H1 (cell line): ENCODE measurements at regions of chr22 and their contacts with region 1.

Region 1: GRCh38 chr22:25334162-25334490 is 114.7 kb downstream of the CRYBB2 start:
- DNase-seq: peak in 1 of 2 experiments; percentile 94
- H3K4me3 ChIP-seq: no peak overlapping the region
- H3K27ac ChIP-seq: no peak overlapping the region
- H3K4me1 ChIP-seq: no peaks in the 10 kb centered on the region
- H3K27me3 ChIP-seq: no peaks in the 10 kb centered on the region
- CTCF ChIP-seq: peak; percentile 81 to 88 (median 82)
- EP300 ChIP-seq: no peak
- POLR2A ChIP-seq: no peak
- RAD21 ChIP-seq: peak; percentile 69 to 78

Region 2: DNA sequence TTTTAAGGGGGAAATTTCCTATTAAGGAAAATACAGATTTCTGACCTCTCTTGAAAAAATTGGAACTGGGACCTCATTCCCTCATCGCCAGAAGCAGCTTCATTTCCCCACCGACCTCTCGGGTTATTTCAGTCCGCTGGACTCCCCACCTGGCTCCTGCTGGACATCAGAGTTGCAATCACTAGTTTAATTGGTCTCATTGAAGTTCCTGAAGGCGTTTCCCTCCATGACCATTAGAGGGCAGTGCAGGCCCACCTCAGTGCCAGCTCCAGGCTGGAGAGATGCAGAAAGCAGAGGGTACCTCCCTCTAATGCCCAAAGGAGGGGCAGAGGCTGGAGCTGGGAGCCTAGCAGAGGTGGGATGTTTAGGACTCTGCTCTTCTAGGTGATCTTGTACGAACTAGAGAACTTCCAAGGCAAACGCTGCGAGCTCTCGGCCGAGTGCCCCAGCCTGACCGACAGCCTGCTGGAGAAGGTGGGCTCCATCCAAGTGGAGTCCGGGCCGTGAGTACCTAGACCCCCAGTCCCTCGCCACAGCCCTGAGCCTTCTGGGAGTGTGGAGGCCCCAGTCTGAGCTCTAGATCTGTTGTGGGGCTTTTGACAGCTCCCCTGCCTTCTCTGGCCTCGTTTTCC is 131.7 kb before region 1 on chr22:
- CTCF ChIA-PET with region 1: interaction called, 21 read pairs
- POLR2A ChIA-PET with region 1: no interaction called
- DNase-seq: peak; percentile 54 to 89
- H3K4me3 ChIP-seq: no peak overlapping the region
- H3K27ac ChIP-seq: no peak overlapping the region
- H3K4me1 ChIP-seq: peaks cover 0 to 2% (median 0%) of the 10 kb centered on the region in 4 experiments; a peak in 3 of 7 replicates
- H3K27me3 ChIP-seq: no peaks in the 10 kb centered on the region
- CTCF ChIP-seq: peak; percentile 83 to 94 (median 91)
- EP300 ChIP-seq: no peak
- POLR2A ChIP-seq: no peak
- RAD21 ChIP-seq: peak; percentile 89 to 96

Region 3: DNA sequence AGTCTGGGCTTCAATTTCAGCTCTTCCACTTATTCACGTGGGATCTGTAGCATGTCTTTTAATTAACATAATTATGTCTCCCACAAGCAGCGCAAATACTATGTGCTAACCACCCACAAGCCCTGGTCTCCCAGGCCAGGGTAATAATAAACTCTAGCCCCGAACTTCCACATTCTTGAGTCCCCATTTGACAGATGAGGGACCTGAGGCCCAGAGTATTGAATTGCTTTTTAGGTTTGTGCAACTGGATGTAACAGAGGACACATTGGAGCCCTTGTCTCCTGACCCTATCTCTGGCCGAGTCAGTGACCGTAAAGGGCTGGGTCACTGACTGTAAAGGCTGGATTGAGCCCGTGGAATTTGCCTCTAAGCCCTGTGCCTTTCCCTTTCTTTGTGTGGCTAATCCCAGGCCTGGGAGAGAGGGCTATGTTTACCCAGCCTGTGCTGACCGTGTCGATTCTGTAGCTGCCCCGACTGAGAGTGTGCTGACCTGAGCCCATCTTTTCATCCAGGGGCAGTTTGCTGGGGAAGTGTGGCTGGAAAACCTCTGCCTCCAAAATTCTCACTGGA is 110.8 kb before region 1 on chr22:
- CTCF ChIA-PET with region 1: interaction called, 19 read pairs
- POLR2A ChIA-PET with region 1: no interaction called
- DNase-seq: no peak
- H3K4me3 ChIP-seq: no peak overlapping the region
- H3K27ac ChIP-seq: no peak overlapping the region
- H3K4me1 ChIP-seq: no peaks in the 10 kb centered on the region
- H3K27me3 ChIP-seq: peaks cover 0 to 4% (median 0%) of the 10 kb centered on the region in 4 experiments; a peak in 2 of 7 replicates
- CTCF ChIP-seq: no peak
- EP300 ChIP-seq: no peak
- POLR2A ChIP-seq: no peak
- RAD21 ChIP-seq: no peak

Region 4: DNA sequence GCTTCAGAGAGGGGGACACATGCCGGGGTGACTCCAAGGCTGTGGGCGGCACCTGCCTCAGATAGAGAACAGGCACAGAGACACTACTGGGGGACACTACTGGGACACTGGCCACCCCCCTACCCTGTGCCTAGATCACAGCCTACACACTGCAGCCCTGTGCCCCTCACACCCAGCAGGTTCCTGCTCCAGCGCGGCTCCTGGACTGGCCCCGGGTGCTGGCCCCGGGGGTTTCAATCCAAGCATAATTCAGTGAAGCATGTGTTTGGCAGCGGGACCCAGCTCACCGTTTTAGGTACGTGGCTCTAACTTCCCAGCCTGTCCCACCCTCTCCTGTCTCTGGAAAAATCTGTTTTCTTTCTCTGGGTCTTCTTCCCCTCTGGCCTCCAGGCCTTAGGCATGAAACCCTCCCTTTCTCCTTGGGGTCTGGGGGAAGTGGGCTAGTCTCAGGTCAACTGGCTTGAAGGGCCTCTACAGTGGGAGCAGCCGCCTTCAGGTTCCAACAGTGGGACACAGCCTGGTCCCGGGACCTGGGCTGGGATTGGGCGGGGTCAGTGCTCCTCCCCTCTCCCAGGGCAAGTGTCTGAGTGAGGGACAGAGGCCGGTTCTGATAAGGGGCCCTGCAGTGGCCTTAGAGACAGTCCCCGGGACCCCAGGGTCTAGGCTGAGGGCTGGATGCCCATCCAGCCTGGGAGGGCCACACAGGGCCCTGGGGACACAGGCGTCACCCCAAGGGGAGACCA is 15.9 kb before region 1 on chr22:
- CTCF ChIA-PET with region 1: interaction called, 10 read pairs
- POLR2A ChIA-PET with region 1: no interaction called
- DNase-seq: no peak
- H3K4me3 ChIP-seq: no peak overlapping the region
- H3K27ac ChIP-seq: no peak overlapping the region
- H3K4me1 ChIP-seq: no peaks in the 10 kb centered on the region
- H3K27me3 ChIP-seq: no peaks in the 10 kb centered on the region
- CTCF ChIP-seq: no peak
- EP300 ChIP-seq: no peak
- POLR2A ChIP-seq: no peak
- RAD21 ChIP-seq: no peak

Region 5: DNA sequence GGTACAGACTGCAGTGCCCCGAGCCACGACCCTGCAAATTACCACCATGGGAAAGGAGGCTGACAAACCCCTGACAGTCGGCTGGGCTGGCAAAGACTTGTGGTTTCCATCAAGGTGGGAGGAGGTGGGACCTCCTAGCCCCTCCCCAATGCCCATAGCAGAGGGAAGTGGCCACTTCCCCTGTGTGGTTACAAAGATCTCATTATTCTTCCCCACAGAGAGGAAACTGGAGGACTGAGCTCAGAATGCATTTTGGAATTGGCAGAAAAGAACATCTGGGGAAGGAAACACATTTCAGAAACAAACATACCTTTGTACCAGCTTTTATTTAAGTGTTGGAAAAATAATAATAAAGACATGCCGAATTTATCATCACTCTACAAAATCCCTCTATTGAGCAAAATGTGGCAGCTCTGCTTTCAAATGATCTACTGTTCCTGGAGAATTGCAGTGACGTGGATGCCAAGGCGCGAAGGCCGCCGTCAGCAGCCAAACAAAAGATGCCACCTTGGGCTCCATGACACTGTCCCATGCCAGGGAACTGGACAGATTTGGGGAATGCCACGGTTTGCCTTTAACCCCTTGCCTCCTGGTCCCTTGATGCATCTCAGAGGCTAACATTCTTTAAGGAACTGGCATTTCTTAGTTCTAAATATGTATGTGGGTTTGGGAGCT is 54.9 kb after region 1 on chr22:
- CTCF ChIA-PET with region 1: no interaction called
- POLR2A ChIA-PET with region 1: no interaction called
- DNase-seq: peak in 1 of 2 experiments; percentile 44
- H3K4me3 ChIP-seq: no peak overlapping the region
- H3K27ac ChIP-seq: no peak overlapping the region
- H3K4me1 ChIP-seq: peaks cover 11 to 46% (median 31%) of the 10 kb centered on the region in 4 experiments
- H3K27me3 ChIP-seq: no peaks in the 10 kb centered on the region
- CTCF ChIP-seq: no peak
- EP300 ChIP-seq: no peak
- POLR2A ChIP-seq: no peak
- RAD21 ChIP-seq: no peak